GM10248 (cell line): ENCODE measurements at regions of chr14 and their contacts with region 1.

Region 1: GRCh38 chr14:39015360-39015961 is 87.6 kb downstream of the SEC23A start:
- DNase-seq: peak; percentile 66
- CTCF ChIP-seq: peak; percentile 79

Region 2: DNA sequence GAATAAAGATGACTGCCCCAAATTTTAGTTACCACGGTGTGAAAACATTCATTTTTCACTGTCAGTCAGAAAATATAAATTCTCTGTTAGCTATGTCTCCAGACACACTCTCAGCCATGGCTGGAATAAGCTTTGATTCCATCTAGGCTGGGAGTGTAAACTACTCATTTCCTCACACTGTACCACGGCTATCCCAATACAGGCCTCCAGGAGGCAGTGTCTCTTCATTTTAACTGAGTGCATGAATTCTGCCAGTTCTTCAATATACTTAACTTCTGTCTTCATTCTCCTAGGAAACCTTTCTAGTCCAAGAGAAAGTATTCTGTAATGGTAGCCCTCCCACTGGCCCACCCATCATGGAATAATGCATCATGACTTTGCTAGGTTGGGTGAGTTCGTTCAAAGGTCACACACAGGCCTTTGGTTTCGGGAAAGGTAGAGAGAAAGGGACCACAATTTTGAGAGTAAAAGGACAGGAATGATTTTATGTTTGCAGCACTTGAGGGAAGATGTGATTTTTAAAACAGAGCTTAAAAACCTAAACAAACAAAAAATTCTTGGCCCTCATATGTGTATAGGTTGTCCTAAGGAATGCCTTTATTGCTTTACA is 293.5 kb before region 1 on chr14:
- CTCF ChIA-PET with region 1: interaction called, 68 read pairs
- POLR2A ChIA-PET with region 1: no interaction called
- DNase-seq: peak; percentile 38
- CTCF ChIP-seq: peak; percentile 73

Region 3: DNA sequence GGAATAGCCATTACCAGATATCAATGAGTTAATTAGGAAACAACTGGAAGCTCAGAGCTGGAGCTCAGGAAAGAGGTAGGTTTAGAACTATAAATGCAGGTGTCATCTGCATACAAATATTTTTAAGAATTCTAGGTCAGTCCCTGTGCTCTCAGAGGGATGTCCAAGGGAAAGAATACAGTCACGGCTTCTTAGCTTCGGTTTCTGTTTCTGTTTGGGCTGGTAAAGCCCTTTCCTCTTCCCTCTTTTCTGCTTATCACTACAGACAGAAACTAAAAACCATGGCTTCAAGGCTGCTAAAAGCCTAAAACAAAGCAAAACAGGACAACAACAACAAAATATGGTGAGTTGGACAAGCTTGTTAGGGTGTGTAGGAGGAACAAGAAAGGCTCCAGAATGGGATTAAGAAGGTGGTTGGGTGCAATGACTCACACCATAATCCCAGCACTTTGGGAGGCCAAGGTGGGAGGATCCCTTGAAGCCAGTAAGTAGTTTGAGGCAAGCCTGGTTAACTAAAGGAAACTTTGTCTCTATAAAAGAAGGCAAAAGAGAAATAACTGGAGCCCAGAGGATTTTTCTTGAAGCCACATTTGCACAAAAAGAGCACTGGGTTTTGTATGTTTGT is 25.4 kb before region 1 on chr14:
- CTCF ChIA-PET with region 1: interaction called, 15 read pairs
- POLR2A ChIA-PET with region 1: no interaction called
- DNase-seq: no peak
- CTCF ChIP-seq: no peak

Region 4: DNA sequence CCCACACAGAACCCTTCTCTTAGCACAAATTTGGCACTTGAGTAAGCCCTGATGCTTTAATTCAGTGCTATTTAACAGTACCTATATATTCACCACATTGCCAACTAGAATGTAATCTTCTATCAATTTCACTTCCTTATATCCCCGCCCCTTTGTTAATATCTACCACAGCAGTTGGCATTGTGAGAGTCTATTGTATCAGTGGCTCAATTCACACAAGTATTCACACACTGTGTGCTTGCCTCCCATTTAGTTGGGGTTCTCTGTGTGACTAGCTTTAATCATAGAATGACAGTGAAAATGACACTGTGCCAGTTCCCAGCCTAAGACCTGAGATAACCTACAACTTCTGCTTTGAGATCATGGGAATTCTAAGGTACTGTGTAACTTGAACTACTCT is 15.5 kb before region 1 on chr14:
- CTCF ChIA-PET with region 1: interaction called, 16 read pairs
- POLR2A ChIA-PET with region 1: no interaction called
- DNase-seq: no peak
- CTCF ChIP-seq: no peak

Region 5: GRCh38 chr14:39005044-39005880 is 10.2 kb before region 1 on chr14:
- CTCF ChIA-PET with region 1: interaction called, 16 read pairs
- POLR2A ChIA-PET with region 1: no interaction called
- DNase-seq: no peak
- CTCF ChIP-seq: no peak

Region 6: GRCh38 chr14:39025810-39026627 is 10.6 kb after region 1 on chr14:
- CTCF ChIA-PET with region 1: interaction called, 31 read pairs
- POLR2A ChIA-PET with region 1: no interaction called
- DNase-seq: no peak
- CTCF ChIP-seq: no peak

Region 7: GRCh38 chr14:39050389-39050788 is 34.9 kb after region 1 on chr14:
- CTCF ChIA-PET with region 1: interaction called, 12 read pairs
- POLR2A ChIA-PET with region 1: no interaction called
- DNase-seq: peak; percentile 17
- CTCF ChIP-seq: no peak